CD4-positive, alpha-beta memory T cell (primary cell): ENCODE measurements at regions of chr13 and their contacts with region 1.

Region 1: DNA sequence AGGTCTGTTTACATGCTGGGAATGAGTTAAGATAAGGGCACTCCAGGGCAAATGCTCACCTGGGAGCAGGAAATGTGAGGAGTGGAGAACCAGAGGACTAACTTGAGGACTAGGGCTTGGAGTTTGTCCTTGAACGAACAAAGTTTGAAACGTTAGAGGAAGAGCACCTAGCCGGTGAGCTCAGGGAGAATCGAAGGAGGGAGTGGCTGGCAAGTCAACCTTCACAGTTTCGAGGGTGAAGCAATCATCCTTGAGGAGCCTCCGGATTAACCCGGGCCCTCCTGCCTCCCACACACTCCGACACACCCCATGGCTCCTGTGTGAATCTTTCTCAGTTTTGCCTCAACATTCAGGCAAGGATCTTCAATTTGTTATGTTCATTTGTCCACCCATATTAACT is 58.6 kb downstream of the LMO7 start:
- DNase-seq: no peak
- H3K4me3 ChIP-seq: no peak overlapping the region
- H3K4me3 Mint-ChIP-seq: no peak overlapping the region
- H3K27ac ChIP-seq: no peak overlapping the region
- H3K27ac Mint-ChIP-seq: no peak overlapping the region
- H3K4me1 ChIP-seq: peaks cover 4% of the 10 kb centered on the region
- H3K4me1 Mint-ChIP-seq: peaks cover 0 to 2% (median 0%) of the 10 kb centered on the region in 4 donors
- H3K27me3 ChIP-seq: no peaks in the 10 kb centered on the region
- H3K27me3 Mint-ChIP-seq: no peaks in the 10 kb centered on the region

Region 2: GRCh38 chr13:75482070-75482819 is 212.5 kb before region 1 on chr13 and contains the start of gene TBC1D4:
- CTCF ChIA-PET with region 1: no interaction called
- POLR2A ChIA-PET with region 1: no interaction called
- intact Hi-C with region 1: no loop called
- DNase-seq: peak; percentile 25 to 38 (median 29)
- H3K4me3 ChIP-seq: peak within 1 kb of the TSS; percentile 29 to 53
- H3K4me3 Mint-ChIP-seq: peak within 1 kb of the TSS; percentile 92 to 98 (median 94)
- H3K27ac ChIP-seq: no peak within 1 kb of the TSS
- H3K27ac Mint-ChIP-seq: peak within 1 kb of the TSS in 3 of 7 donors; percentile 15 to 64 (median 41)
- H3K4me1 ChIP-seq: peaks cover 12% of the 10 kb centered on the region
- H3K4me1 Mint-ChIP-seq: peaks cover 8 to 19% (median 12%) of the 10 kb centered on the region in 4 donors
- H3K27me3 ChIP-seq: no peaks in the 10 kb centered on the region
- H3K27me3 Mint-ChIP-seq: peaks cover 41 to 52% of the 10 kb centered on the region in 2 donors
- total RNA-seq, gene TBC1D4: 63.5 to 67.2 TPM

Region 3: GRCh38 chr13:75675421-75675820 is 19.3 kb before region 1 on chr13:
- CTCF ChIA-PET with region 1: interaction called, 15 read pairs
- POLR2A ChIA-PET with region 1: no interaction called
- intact Hi-C with region 1: no loop called
- DNase-seq: no peak
- H3K4me3 ChIP-seq: no peak overlapping the region
- H3K4me3 Mint-ChIP-seq: no peak overlapping the region
- H3K27ac ChIP-seq: no peak overlapping the region
- H3K27ac Mint-ChIP-seq: no peak overlapping the region
- H3K4me1 ChIP-seq: no peaks in the 10 kb centered on the region
- H3K4me1 Mint-ChIP-seq: no peaks in the 10 kb centered on the region
- H3K27me3 ChIP-seq: no peaks in the 10 kb centered on the region
- H3K27me3 Mint-ChIP-seq: no peaks in the 10 kb centered on the region

Region 4: GRCh38 chr13:75715601-75716523 is 21.1 kb after region 1 on chr13:
- CTCF ChIA-PET with region 1: interaction called, 37 read pairs
- POLR2A ChIA-PET with region 1: no interaction called
- intact Hi-C with region 1: no loop called
- DNase-seq: no peak
- H3K4me3 ChIP-seq: no peak overlapping the region
- H3K4me3 Mint-ChIP-seq: no peak overlapping the region
- H3K27ac ChIP-seq: no peak overlapping the region
- H3K27ac Mint-ChIP-seq: no peak overlapping the region
- H3K4me1 ChIP-seq: no peaks in the 10 kb centered on the region
- H3K4me1 Mint-ChIP-seq: peaks cover 0 to 2% (median under 1%) of the 10 kb centered on the region in 4 donors
- H3K27me3 ChIP-seq: no peaks in the 10 kb centered on the region
- H3K27me3 Mint-ChIP-seq: no peaks in the 10 kb centered on the region

Region 5: DNA sequence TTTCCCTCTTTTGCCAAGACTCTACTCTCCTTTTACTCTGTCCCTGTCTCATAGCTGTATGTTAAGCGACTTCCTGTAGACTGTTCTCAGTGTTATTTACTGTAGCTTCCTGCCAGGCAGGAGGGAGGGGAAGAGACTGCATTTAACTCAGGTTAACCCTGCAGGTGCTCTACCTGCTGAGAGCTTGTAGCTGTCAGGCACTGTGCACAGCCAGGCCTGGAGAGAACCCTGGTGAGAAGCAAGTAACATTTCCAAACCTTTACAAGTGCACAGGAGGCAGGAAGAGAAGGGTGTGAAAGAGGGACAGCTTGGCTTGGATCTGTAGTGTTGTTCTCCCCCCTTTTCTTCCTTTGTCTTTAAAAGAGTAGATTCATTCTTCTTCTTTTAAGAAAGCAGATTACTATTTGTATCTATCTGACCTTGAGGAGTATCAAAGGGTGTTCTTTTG is 108.5 kb after region 1 on chr13:
- CTCF ChIA-PET with region 1: interaction called, 12 read pairs
- POLR2A ChIA-PET with region 1: no interaction called
- intact Hi-C with region 1: loop called (anchors 2 kb)
- DNase-seq: peak in 4 of 5 donors; percentile 26 to 38 (median 32)
- H3K4me3 ChIP-seq: no peak overlapping the region
- H3K4me3 Mint-ChIP-seq: peak overlapping the region in 7 of 8 donors; percentile 0 to 80 (median 34)
- H3K27ac ChIP-seq: no peak overlapping the region
- H3K27ac Mint-ChIP-seq: peak overlapping the region in 6 of 7 donors; percentile 22 to 84 (median 76)
- H3K4me1 ChIP-seq: peaks cover 15% of the 10 kb centered on the region
- H3K4me1 Mint-ChIP-seq: peaks cover 17 to 32% (median 22%) of the 10 kb centered on the region in 4 donors
- H3K27me3 ChIP-seq: no peaks in the 10 kb centered on the region
- H3K27me3 Mint-ChIP-seq: no peaks in the 10 kb centered on the region

Region 6: DNA sequence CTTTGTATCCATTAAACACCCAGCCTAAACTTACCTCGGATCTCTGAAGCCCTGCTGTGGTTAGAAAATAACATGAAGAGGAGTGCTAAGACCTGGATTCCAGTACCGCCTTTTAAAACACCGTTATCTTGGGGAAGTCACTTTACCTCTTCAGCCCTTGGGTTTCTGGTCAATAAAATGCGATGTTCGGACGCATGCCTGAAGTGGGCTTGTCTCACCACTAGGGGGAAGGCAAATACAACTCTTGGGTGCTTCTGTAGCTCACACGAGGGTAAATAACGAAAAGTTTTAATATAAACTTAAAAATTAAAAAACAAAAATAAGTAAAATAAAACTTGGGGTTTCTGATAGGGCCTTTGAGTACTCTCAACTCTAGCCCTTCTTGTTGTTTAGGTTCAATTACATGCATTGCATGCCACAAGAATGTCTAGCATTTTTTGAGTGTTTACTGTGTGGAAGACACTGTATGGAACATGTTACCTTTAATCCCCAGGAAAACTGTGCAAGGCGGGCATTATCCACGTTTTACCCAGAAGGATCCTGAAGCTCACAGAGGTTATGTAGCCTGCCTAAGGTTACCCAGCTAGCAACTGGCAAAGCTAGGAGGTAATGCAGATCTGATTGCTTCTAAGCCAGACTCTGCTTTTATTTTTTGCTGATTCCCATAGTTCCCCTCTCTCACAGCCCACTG is 181.8 kb after region 1 on chr13:
- CTCF ChIA-PET with region 1: interaction called, 61 read pairs
- POLR2A ChIA-PET with region 1: no interaction called
- intact Hi-C with region 1: loop called (anchors 2 kb)
- DNase-seq: peak; percentile 49 to 54 (median 51)
- H3K4me3 ChIP-seq: no peak overlapping the region
- H3K4me3 Mint-ChIP-seq: peak overlapping the region in 6 of 8 donors; percentile 24 to 83 (median 58)
- H3K27ac ChIP-seq: no peak overlapping the region
- H3K27ac Mint-ChIP-seq: peak overlapping the region in 3 of 7 donors; percentile 11 to 74 (median 25)
- H3K4me1 ChIP-seq: peaks cover 10% of the 10 kb centered on the region
- H3K4me1 Mint-ChIP-seq: peaks cover 7 to 16% (median 10%) of the 10 kb centered on the region in 4 donors
- H3K27me3 ChIP-seq: no peaks in the 10 kb centered on the region
- H3K27me3 Mint-ChIP-seq: peaks cover 0 to 1% of the 10 kb centered on the region in 2 donors

Region 7: DNA sequence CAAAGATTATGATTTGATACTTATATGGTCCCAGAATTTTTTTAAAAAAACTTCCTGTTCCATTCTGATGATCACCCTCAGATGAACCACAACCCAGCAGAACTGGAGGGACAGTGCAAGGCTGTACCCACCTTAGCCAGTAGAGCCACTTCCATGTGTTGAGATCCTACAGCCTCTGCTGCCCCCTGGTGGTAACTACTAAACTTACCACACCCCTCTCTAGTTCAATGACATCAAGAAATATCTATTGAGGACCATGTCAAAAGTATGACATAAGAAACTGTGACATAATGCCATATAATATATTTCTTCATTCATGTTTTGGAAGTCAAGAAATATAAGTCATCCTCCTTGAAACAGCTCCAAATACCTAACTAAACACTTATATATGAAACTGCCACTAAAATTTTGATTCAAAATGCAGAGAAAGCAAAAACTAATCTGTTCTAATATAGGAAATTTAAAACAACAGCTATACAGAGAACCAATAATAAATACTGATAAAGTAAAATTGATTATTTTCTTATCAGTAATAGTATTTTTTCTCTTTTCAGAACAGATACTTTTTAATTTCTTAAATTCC is 778.9 kb after region 1 on chr13:
- CTCF ChIA-PET with region 1: interaction called, 59 read pairs
- POLR2A ChIA-PET with region 1: no interaction called
- intact Hi-C with region 1: no loop called
- DNase-seq: peak; percentile 61 to 67 (median 66)
- H3K4me3 ChIP-seq: no peak overlapping the region
- H3K4me3 Mint-ChIP-seq: no peak overlapping the region
- H3K27ac ChIP-seq: no peak overlapping the region
- H3K27ac Mint-ChIP-seq: no peak overlapping the region
- H3K4me1 ChIP-seq: no peaks in the 10 kb centered on the region
- H3K4me1 Mint-ChIP-seq: no peaks in the 10 kb centered on the region
- H3K27me3 ChIP-seq: no peaks in the 10 kb centered on the region
- H3K27me3 Mint-ChIP-seq: peaks cover 0 to 6% of the 10 kb centered on the region in 2 donors

Region 8: DNA sequence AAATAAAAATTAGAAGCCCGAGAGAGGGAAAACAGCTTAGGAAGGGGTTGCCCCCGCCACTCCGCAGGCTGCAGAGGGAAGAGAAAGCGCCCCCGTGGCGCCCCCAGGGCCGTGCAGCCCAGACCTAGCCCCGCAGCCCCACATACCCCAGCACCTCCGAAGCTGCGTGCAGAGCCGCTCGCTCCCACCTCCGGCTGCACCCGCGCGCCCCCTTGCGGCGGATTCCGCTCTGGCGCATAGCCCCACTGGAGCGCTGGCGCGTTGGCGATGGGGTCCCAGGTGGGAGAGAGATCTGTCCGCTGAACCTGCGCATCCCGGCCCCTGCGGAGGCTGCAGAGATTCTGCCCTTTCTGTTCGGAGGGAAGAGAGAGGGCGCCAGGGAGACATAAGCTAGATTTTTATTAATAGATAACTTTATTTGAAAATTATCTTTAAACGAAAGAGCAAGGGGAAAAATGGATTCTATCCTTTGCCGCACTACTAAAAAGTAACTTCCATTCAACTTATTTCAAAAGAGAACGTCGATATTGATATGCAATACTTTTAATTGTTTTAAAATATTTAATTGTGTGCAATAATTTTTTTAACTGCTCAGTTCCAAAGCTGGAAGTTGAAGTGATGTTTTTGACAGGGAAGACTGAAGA is 1285.5 kb after region 1 on chr13:
- CTCF ChIA-PET with region 1: interaction called, 4 read pairs
- POLR2A ChIA-PET with region 1: no interaction called
- intact Hi-C with region 1: loop called (anchors 2 kb)
- DNase-seq: peak; percentile 72 to 83 (median 78)
- H3K4me3 ChIP-seq: no peak overlapping the region
- H3K4me3 Mint-ChIP-seq: peak overlapping the region in 6 of 8 donors; percentile 35 to 69 (median 54)
- H3K27ac ChIP-seq: no peak overlapping the region
- H3K27ac Mint-ChIP-seq: peak overlapping the region in 2 of 7 donors; percentile 29 to 48
- H3K4me1 ChIP-seq: peaks cover 20% of the 10 kb centered on the region
- H3K4me1 Mint-ChIP-seq: peaks cover 7 to 15% (median 10%) of the 10 kb centered on the region in 4 donors
- H3K27me3 ChIP-seq: no peaks in the 10 kb centered on the region
- H3K27me3 Mint-ChIP-seq: peaks cover 18% of the 10 kb centered on the region in 2 donors